Aorta (tissue), 5 donors: ENCODE measurements at regions of chr12 and their contacts with region 1.

Region 1: GRCh38 chr12:8038659-8039114 is 6.2 kb downstream of the FOXJ2 start:
- DNase-seq: peak; percentile 75 to 82
- ATAC-seq: peak; percentile 76
- H3K4me3 ChIP-seq: no peak overlapping the region
- H3K27ac ChIP-seq: peak overlapping the region in 1 of 2 donors; percentile 46
- H3K4me1 ChIP-seq: peaks cover 2 to 13% of the 10 kb centered on the region in 2 donors
- H3K27me3 ChIP-seq: no peaks in the 10 kb centered on the region

Region 2: DNA sequence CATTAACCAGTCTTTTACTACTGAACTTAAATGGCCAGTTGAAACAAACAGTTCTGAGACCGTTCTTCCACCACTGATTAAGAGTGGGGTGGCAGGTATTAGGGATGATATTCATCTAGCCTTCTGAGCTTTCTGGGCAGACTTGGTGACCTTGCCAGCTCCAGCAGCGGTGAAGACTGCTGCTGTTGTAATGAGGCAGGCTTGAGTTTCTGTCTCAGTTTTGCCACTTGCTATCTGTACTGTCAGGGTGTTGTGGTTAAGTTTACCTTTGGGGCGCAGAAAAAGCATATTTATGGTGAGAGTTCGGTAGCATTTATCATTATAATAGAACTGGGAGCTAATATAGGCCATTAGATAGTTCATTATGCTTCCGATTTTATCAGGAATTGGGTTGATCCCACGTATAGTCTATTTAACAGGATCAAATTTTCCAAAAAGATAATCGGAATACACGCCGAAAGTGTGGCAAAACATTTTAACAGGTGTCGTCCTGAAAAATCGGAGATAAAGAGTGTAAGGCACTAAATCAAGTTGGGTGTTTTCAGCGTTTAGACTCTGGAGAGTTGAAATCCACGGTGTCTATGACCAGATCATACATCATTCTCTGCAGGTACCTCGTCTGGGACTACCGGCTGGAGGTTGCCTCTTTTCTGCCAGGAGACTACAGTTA is 42.7 kb after region 1 on chr12:
- intact Hi-C with region 1: loop called (anchors 2 to 5 kb)
- DNase-seq: no peak
- ATAC-seq: no peak
- H3K4me3 ChIP-seq: peak overlapping the region; percentile 85 to 97
- H3K27ac ChIP-seq: peak overlapping the region in 1 of 2 donors; percentile 96
- H3K4me1 ChIP-seq: peaks cover 0 to 2% of the 10 kb centered on the region in 2 donors
- H3K27me3 ChIP-seq: no peaks in the 10 kb centered on the region